ENCODE measurements at regions of chr17 and their contacts with region 1.

Region 1: GRCh38 chr17:31549525-31550388 is 158.3 kb downstream of the RAB11FIP4 start:
- DNase-seq: peak; percentile 91 to 93
- ATAC-seq: peak; percentile 93 to 98 (median 96)
- H3K4me3 ChIP-seq: peak overlapping the region; percentile 55 to 93 (median 80)
- H3K27ac ChIP-seq: peak overlapping the region; percentile 83 to 98 (median 94)
- H3K4me1 ChIP-seq: peaks cover 0 to 19% (median 8%) of the 10 kb centered on the region in 9 donors
- H3K27me3 ChIP-seq: no peaks in the 10 kb centered on the region
- CTCF ChIP-seq: peak in 1 of 9 donors; percentile 4

Region 2: GRCh38 chr17:31678431-31678830 is 128.7 kb after region 1 on chr17:
- intact Hi-C with region 1: loop called in 1 of 10 experiments (anchors 2 kb)
- DNase-seq: no peak
- ATAC-seq: peak in 5 of 8 donors; percentile 23 to 83 (median 41)
- H3K4me3 ChIP-seq: no peak overlapping the region
- H3K27ac ChIP-seq: no peak overlapping the region
- H3K4me1 ChIP-seq: peaks cover 0 to 12% (median 7%) of the 10 kb centered on the region in 9 donors
- H3K27me3 ChIP-seq: no peaks in the 10 kb centered on the region
- CTCF ChIP-seq: no peak

Region 3: GRCh38 chr17:31722251-31723056 is 172.7 kb after region 1 on chr17:
- intact Hi-C with region 1: loop called in 1 of 10 experiments (anchors 10 kb)
- DNase-seq: peak; percentile 21 to 64
- ATAC-seq: peak; percentile 88 to 98 (median 95)
- H3K4me3 ChIP-seq: no peak overlapping the region
- H3K27ac ChIP-seq: peak overlapping the region in 9 of 10 donors; percentile 47 to 88 (median 82)
- H3K4me1 ChIP-seq: peaks cover 13 to 36% (median 27%) of the 10 kb centered on the region in 9 donors
- H3K27me3 ChIP-seq: no peaks in the 10 kb centered on the region
- CTCF ChIP-seq: no peak

Region 4: DNA sequence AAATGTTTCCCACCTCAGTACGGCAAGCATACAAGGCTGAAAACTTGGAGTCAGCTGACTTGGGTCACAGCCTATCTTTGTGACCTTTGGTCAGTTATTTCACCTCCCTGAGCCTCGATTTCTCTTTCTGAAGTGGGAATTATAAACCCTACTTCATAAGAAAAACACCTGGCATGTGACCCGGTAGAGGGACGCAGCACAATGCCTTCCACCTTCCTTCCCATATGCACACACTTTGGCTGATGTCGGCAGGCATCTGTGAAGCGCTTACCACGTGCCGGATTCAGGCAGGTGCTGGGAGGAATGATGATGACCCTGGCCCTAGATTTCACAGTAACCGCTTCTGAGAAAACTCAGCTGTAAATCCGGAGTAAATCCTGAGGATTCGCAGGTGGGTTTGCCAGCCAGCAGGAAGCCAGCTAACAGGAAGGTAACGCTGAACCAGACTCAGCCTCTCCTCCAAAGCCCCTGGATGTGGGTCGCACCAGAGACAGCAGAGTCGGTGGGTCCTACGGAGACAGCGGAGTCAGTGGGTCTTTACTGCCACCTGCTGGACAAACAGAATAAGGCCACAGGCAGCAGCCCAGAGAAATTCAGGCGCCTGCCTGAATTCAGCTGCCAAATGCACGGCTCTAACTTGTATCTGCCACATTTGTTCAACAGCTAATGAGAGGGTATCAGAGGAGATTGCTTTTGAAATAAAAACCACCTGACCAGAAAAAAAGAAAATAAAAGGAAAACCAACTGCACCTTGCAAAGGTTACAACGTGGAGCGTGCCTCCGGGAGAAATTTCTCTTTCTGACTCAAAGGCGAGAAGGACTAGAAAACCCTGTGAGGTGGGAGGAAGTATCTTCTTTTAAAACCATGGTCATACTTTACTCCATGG is 292.7 kb after region 1 on chr17:
- intact Hi-C with region 1: loop called in 1 of 10 experiments (anchors 2 kb)
- DNase-seq: peak; percentile 56 to 70
- ATAC-seq: peak; percentile 84 to 96 (median 92)
- H3K4me3 ChIP-seq: peak overlapping the region in 8 of 10 donors; percentile 9 to 38 (median 31)
- H3K27ac ChIP-seq: peak overlapping the region in 9 of 10 donors; percentile 8 to 57 (median 31)
- H3K4me1 ChIP-seq: peaks cover 8 to 30% (median 18%) of the 10 kb centered on the region in 9 donors
- H3K27me3 ChIP-seq: no peaks in the 10 kb centered on the region
- CTCF ChIP-seq: peak; percentile 92 to 99 (median 97)

Measured in heart right ventricle (tissue), 16 donors.